ENCODE measurements at regions of chr16 and their contacts with region 1.

Region 1: GRCh38 chr16:24568392-24568791 is 29.0 kb downstream of the RBBP6 start:
- DNase-seq: no peak
- ATAC-seq: no peak
- H3K4me3 ChIP-seq: no peak overlapping the region
- H3K27ac ChIP-seq: no peak overlapping the region
- H3K4me1 ChIP-seq: no peaks in the 10 kb centered on the region
- H3K27me3 ChIP-seq: no peaks in the 10 kb centered on the region
- CTCF ChIP-seq: peak in 5 of 9 donors; percentile 24 to 46 (median 33)

Region 2: GRCh38 chr16:24552705-24553246 is 15.6 kb before region 1 on chr16:
- intact Hi-C with region 1: loop called in 1 of 10 experiments (anchors 1 kb)
- DNase-seq: no peak
- ATAC-seq: no peak
- H3K4me3 ChIP-seq: no peak overlapping the region
- H3K27ac ChIP-seq: no peak overlapping the region
- H3K4me1 ChIP-seq: peaks cover 0 to 29% (median 10%) of the 10 kb centered on the region in 9 donors
- H3K27me3 ChIP-seq: no peaks in the 10 kb centered on the region
- CTCF ChIP-seq: no peak

Region 3: DNA sequence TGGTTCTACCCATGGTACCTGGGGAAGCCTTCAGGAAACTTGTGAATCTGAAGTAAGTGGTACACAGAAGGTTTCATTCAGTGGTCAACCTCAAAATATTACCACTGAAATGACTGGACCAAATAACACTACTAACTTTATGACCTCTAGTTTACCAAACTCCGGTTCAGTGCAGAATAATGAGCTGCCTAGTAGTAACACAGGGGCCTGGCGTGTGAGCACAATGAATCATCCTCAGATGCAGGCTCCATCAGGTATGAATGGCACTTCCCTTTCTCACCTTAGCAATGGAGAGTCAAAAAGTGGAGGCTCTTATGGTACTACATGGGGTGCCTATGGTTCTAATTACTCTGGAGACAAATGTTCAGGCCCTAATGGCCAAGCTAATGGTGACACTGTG is 221.5 kb after region 1 on chr16:
- intact Hi-C with region 1: loop called in 2 of 10 experiments (anchors 10 kb)
- DNase-seq: no peak
- ATAC-seq: no peak
- H3K4me3 ChIP-seq: no peak overlapping the region
- H3K27ac ChIP-seq: no peak overlapping the region
- H3K4me1 ChIP-seq: peaks cover 0 to 16% (median 4%) of the 10 kb centered on the region in 9 donors
- H3K27me3 ChIP-seq: no peaks in the 10 kb centered on the region
- CTCF ChIP-seq: no peak

Region 4: DNA sequence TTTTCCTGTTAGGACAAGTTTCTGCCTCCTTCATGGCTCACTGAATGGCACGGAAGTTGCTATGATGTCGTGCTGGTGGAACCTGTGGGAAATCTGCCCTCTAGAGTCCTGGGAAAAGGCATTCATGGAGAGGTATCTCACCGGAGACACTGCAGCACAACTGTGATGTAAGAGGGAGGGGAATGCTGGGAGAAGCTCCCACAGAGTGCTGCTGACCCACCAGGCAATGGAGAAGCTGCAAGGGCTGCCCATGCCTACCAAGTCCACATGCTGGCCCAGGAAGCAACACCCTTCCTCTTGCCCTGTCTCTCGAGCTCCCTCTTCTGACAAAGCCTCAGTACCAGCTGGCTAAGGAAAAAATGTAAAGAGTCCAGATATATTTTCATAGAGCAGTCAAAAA is 232.2 kb after region 1 on chr16:
- intact Hi-C with region 1: loop called (anchors 5 to 10 kb)
- DNase-seq: no peak
- ATAC-seq: peak in 6 of 8 donors; percentile 37 to 62 (median 50)
- H3K4me3 ChIP-seq: no peak overlapping the region
- H3K27ac ChIP-seq: no peak overlapping the region
- H3K4me1 ChIP-seq: no peaks in the 10 kb centered on the region
- H3K27me3 ChIP-seq: no peaks in the 10 kb centered on the region
- CTCF ChIP-seq: peak in 7 of 9 donors; percentile 11 to 40 (median 31)

Region 5: DNA sequence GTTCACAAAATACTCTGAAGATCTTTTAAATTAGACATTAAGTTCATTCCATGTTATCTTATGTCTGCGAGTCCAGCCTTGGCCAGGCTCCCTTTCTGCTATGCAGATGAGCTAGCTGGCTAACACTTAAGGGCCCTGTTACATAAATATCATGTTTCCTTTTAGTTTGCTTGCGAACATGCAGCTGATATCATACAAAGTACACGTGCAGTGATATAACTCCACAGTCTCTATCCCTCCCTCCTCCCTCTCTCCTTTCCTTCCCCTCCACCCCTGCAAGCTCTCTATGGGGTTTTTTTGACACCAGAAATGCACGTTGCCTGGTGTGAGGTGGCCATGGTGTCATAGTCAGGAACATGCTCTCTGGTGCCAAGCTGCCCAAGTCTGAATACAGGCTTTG is 400.7 kb after region 1 on chr16:
- intact Hi-C with region 1: loop called in 1 of 10 experiments (anchors 10 kb)
- DNase-seq: no peak
- ATAC-seq: peak in 7 of 8 donors; percentile 7 to 60 (median 58)
- H3K4me3 ChIP-seq: no peak overlapping the region
- H3K27ac ChIP-seq: peak overlapping the region in 5 of 10 donors; percentile 11 to 90 (median 44)
- H3K4me1 ChIP-seq: peaks cover 2 to 53% (median 30%) of the 10 kb centered on the region in 9 donors
- H3K27me3 ChIP-seq: no peaks in the 10 kb centered on the region
- CTCF ChIP-seq: no peak